ENCODE measurements at regions of chrX and their contacts with region 1.

Region 1: GRCh38 chrX:49184294-49185061 is 1.7 kb downstream of the PRICKLE3 start:
- DNase-seq: peak; percentile 88
- ATAC-seq: peak; percentile 88

Region 2: DNA sequence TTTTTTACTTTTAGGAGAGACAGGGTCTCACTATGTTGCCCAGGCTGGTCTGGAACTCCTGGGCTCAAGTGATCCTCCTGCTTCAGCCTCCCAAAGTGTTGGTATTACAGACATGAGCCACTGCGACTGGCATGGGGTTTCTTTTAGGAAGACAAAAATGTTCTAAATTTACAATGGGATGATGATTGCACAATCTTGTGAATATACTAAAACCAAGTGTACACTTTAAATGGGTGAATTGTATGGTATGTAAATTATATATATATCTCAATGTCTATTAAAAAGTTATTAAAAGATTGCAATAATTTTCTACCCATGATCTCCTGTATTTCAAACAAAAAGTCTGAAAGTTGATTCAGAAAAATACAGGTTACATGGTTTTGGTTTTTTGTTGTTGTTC is 31.0 kb before region 1 on chrX:
- intact Hi-C with region 1: no loop called
- DNase-seq: no peak
- ATAC-seq: no peak

Region 3: DNA sequence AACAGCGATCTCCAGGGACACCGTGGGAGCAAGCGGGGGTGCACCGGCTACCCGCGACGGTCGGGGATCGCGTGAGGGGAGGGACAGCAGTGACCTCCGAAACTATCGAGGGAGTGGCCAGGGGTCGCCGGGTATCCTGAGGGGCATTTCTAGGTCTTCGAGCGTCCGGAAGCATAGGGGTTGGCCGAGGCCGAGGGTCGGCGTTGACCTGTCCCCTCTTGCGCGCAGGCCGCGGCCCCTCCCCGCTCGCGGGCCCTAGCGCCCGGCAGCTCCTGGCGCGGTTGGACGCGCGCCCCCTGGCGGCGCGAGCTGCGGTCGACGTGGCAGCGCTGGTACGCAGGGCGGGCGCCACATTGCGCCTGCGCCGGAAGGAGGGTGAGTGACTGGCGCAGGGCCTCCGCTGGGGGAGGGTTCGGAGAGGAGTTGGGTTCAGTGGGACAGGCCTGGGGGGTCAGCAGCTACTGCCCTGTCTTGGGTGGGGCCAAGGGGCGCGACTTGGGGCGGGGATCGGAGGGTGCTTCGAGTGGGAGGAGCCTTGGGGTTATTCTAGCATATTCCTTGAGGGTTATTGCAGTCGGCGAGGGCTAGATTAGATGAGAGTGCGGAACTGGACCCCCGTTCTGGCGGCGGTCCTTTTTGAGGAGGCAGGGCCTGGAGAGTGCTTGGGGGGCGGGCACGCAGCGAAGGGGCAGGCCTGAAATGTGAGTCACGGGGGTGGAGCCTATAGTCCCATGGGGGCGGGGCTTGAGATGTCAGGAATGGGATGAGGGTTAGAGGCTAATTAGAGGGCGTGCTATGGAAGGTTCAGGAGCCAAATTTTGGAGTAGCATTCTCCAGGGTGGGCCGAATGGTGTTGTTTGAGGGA is 20.7 kb before region 1 on chrX:
- intact Hi-C with region 1: loop called (anchors 2 kb)
- DNase-seq: peak; percentile 95
- ATAC-seq: peak; percentile 72

Region 4: GRCh38 chrX:49257846-49258748 is 73.6 kb after region 1 on chrX:
- intact Hi-C with region 1: no loop called
- DNase-seq: no peak
- ATAC-seq: no peak

Region 5: DNA sequence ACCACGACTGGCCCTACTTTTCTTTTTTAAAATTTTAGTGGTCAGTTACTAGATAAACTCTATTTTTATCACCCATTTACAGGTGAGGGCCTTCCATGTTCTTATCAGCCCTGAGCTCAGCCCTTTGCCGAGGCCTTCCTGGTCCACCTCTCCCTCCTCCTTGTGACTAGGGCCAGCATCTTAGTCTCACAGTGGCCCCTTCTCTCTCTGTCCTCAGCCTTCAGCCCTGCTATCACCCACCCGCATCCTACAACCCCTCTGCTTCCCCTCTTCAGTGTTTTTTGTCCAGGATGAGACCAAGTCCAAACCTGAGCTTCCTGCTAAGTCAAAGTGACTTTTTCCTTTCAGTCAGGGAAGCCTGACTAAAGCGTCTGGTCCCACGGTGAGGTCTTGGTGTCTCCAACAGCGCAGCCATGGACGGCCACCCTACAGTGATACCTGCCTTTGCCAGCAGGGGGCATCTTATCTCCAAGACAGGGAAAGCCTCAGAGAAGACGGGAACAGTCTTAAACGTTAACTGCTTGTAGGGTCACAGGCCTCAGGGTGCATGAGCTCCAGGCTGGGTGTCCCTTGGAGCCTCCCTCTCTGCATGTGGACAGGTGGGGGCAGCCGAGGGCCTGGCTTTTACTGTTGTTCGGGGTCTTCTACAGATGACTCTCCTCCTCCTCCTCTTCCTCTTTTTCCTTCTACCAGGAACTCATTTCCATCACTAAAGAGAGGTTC is 107.3 kb after region 1 on chrX:
- intact Hi-C with region 1: no loop called
- DNase-seq: no peak
- ATAC-seq: peak; percentile 57